HCT116 (cell line): ENCODE measurements at regions of chr2 and their contacts with region 1.

Region 1: DNA sequence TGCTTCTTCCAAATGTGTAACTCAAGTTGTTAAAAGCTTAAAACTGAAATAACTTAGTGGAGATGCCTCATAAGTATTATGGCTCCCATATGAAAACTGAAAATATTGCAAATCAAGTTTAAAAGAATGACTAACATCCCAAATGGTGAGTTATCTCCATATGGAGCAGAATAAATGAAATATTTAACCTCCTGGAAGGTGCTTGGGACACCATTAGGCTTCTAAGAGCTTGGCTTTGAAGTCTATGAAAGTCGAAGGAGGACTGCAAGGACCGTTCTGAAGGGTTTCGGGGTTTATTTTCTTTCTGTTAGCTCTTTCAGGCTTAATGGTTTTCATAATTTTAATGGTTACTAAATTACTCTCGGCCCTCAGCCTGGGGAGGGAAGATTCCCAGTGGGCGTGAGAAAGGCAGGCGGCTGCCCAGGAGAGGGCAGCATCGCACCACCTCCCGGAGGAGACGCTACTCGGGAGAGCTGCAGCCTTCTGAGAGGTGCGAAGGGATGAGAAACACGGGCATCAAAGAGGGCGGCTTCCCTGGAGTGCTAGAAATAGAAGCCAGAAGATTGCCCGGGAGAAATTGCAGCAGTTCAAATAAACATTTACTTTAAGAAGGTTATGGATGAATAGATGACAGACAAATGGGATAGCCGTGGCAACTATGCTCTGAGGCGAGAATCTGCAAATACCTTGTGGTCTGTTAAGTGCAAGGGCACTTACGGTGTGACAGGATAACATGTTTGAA is 43.1 kb downstream of the MAP3K19 start:
- DNase-seq: peak; percentile 48
- ATAC-seq: peak; percentile 100
- H3K4me3 ChIP-seq: no peak overlapping the region
- H3K27ac ChIP-seq: no peak overlapping the region
- H3K4me1 ChIP-seq: no peaks in the 10 kb centered on the region
- H3K27me3 ChIP-seq: peaks cover 4% of the 10 kb centered on the region; the same call in 1 of the 2 replicates
- CTCF ChIP-seq: peak; percentile 83 to 97 (median 96)
- POLR2A ChIP-seq: no peak
- RAD21 ChIP-seq: peak; percentile 97

Region 2: GRCh38 chr2:134988994-134989605 is 15.1 kb before region 1 on chr2:
- CTCF ChIA-PET with region 1: interaction called, 11 read pairs
- POLR2A ChIA-PET with region 1: no interaction called
- RAD21 ChIA-PET with region 1: no interaction called
- intact Hi-C with region 1: no loop called
- DNase-seq: peak; percentile 18
- ATAC-seq: peak; percentile 85
- H3K4me3 ChIP-seq: no peak overlapping the region
- H3K27ac ChIP-seq: no peak overlapping the region
- H3K4me1 ChIP-seq: no peaks in the 10 kb centered on the region
- H3K27me3 ChIP-seq: peaks cover 21% of the 10 kb centered on the region; the same call in 1 of the 2 replicates
- CTCF ChIP-seq: peak; percentile 31 to 65 (median 45); a peak in 4 of 6 replicates
- POLR2A ChIP-seq: no peak
- RAD21 ChIP-seq: peak; percentile 71

Region 3: GRCh38 chr2:135258193-135258592 is 254.0 kb after region 1 on chr2:
- CTCF ChIA-PET with region 1: no interaction called
- POLR2A ChIA-PET with region 1: no interaction called
- RAD21 ChIA-PET with region 1: no interaction called
- intact Hi-C with region 1: loop called (anchors 2 kb)
- DNase-seq: no peak
- ATAC-seq: 0 out of 2 replicates have a peak, but pooled peaks have one; percentile 50
- H3K4me3 ChIP-seq: no peak overlapping the region
- H3K27ac ChIP-seq: no peak overlapping the region
- H3K4me1 ChIP-seq: peaks cover 0 to 8% of the 10 kb centered on the region in 2 experiments; a peak in 2 of 4 replicates
- H3K27me3 ChIP-seq: no peaks in the 10 kb centered on the region
- CTCF ChIP-seq: peak in 2 of 3 experiments; percentile 11 to 22; a peak in 1 of 6 replicates
- POLR2A ChIP-seq: no peak
- RAD21 ChIP-seq: peak; percentile 53

Region 4: GRCh38 chr2:135473567-135473966 is 469.4 kb after region 1 on chr2:
- CTCF ChIA-PET with region 1: interaction called, 7 read pairs
- POLR2A ChIA-PET with region 1: no interaction called
- RAD21 ChIA-PET with region 1: no interaction called
- intact Hi-C with region 1: loop called (anchors 1 kb)
- DNase-seq: no peak
- ATAC-seq: peak; percentile 67
- H3K4me3 ChIP-seq: no peak overlapping the region
- H3K27ac ChIP-seq: no peak overlapping the region
- H3K4me1 ChIP-seq: no peaks in the 10 kb centered on the region
- H3K27me3 ChIP-seq: no peaks in the 10 kb centered on the region
- CTCF ChIP-seq: peak; percentile 47 to 76 (median 74); a peak in 5 of 6 replicates
- POLR2A ChIP-seq: no peak
- RAD21 ChIP-seq: peak; percentile 83

Region 5: GRCh38 chr2:135600915-135601314 is 596.7 kb after region 1 on chr2:
- CTCF ChIA-PET with region 1: interaction called, 10 read pairs
- POLR2A ChIA-PET with region 1: no interaction called
- RAD21 ChIA-PET with region 1: no interaction called
- intact Hi-C with region 1: loop called (anchors 5 kb)
- DNase-seq: no peak
- ATAC-seq: no peak
- H3K4me3 ChIP-seq: no peak overlapping the region
- H3K27ac ChIP-seq: no peak overlapping the region
- H3K4me1 ChIP-seq: no peaks in the 10 kb centered on the region
- H3K27me3 ChIP-seq: no peaks in the 10 kb centered on the region
- CTCF ChIP-seq: peak in 1 of 3 experiments; percentile 33; a peak in 1 of 6 replicates
- POLR2A ChIP-seq: no peak
- RAD21 ChIP-seq: peak; percentile 57

Region 6: DNA sequence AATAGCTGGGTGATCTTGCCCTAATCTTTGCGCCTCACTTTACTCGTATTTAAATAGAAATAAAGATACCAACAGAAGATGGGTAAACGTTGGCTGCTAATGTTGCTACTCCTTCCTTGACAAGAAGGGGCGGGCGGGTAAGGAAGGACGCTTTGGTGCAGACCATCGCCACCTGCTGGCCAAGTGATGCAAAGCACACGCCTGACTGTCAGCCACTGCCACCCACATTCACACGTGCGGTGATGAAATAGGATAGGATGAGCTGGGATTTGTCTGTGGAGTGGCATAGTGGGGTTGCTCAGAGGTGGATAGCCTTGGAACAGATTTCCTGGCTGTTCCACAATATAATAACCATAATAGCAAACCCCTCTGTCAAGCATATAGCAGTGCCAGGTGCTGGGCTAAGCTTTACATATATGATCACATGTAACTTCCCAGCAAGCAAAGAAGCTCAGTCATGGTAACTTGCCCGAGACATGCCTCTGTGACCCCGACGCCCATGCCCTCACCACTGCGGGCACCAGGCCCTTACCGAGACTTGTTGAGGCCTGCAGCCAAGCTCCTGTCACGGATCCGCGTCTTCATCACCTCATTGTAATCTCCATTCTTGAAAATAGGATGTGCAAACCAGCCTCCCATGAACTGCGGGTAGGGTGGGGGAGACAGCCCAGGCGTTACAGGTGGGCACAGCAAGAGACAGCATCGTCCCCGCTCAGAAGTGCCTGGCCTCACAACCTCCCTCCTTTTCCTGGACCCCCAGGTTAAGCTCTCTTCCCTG is 793.5 kb after region 1 on chr2:
- CTCF ChIA-PET with region 1: interaction called, 13 read pairs
- POLR2A ChIA-PET with region 1: no interaction called
- RAD21 ChIA-PET with region 1: interaction called in 1 of 2 experiments, 3 read pairs
- intact Hi-C with region 1: loop called (anchors 5 kb)
- DNase-seq: peak; percentile 54
- ATAC-seq: peak; percentile 95
- H3K4me3 ChIP-seq: no peak overlapping the region
- H3K27ac ChIP-seq: no peak overlapping the region
- H3K4me1 ChIP-seq: peaks cover 0 to 3% of the 10 kb centered on the region in 2 experiments; a peak in 1 of 4 replicates
- H3K27me3 ChIP-seq: no peaks in the 10 kb centered on the region
- CTCF ChIP-seq: peak; percentile 60 to 98 (median 96)
- POLR2A ChIP-seq: no peak
- RAD21 ChIP-seq: peak; percentile 71

Region 7: DNA sequence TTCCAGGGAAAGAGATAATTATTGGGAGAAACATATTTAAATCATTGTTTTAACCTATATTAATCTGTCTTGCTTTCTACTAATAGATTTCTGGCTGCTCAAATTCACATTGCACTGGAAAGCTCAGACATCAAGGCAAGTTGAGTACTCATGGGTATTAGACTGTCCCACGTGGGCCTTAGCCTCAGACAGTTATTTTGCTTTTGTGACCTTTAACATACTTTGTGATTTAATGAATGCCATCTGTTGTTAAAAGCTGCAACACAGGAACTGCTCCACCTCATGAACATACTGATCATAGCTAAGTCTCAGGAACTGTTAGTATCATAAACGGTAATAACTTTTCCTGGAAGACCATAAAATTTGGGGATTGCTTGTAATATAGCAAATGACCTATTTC is 835.5 kb after region 1 on chr2:
- CTCF ChIA-PET with region 1: no interaction called
- POLR2A ChIA-PET with region 1: no interaction called
- RAD21 ChIA-PET with region 1: no interaction called
- intact Hi-C with region 1: no loop called
- DNase-seq: no peak
- ATAC-seq: no peak
- H3K4me3 ChIP-seq: no peak overlapping the region
- H3K27ac ChIP-seq: no peak overlapping the region
- H3K4me1 ChIP-seq: no peaks in the 10 kb centered on the region
- H3K27me3 ChIP-seq: no peaks in the 10 kb centered on the region
- CTCF ChIP-seq: no peak
- POLR2A ChIP-seq: no peak
- RAD21 ChIP-seq: no peak